ENCODE measurements at regions of chr1 and their contacts with region 1.

Region 1: DNA sequence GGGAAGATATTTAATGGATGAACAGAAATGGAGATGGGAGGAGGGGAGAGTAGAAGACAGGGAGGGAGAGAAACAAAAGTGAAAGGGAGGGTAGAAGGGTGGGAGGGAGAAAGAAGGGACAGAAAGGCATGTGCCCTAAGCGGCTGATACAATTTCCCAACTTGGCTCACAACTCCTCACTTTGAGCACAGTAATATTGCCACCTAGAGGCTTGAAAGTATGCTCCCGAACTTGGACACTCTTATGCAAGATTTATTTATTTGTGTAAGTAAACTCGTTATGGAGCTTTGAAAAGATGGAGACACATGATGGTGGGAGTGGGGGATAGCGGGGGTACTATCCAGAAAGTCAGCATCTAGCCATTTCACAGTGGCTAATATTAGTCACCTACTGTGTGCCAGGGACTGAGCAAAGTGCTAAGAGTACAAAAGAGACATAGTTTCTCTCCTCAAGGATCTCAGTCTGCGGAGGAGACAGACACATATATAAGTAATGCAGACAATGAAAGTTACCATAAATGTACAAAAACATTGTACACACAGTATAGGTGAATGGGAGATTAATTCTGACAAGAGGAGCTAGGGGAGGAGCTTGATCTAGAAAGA is 189.7 kb downstream of the SEC16B start:
- DNase-seq: peak in 1 of 2 experiments; percentile 36
- H3K4me3 ChIP-seq: no peak overlapping the region
- H3K27ac ChIP-seq: no peak overlapping the region
- H3K4me1 ChIP-seq: peaks cover 3 to 12% (median 5%) of the 10 kb centered on the region in 4 experiments; a peak in 6 of 7 replicates
- H3K27me3 ChIP-seq: no peaks in the 10 kb centered on the region
- CTCF ChIP-seq: peak in 2 of 3 experiments; percentile 56 to 68; a peak in 2 of 4 replicates
- EP300 ChIP-seq: no peak
- POLR2A ChIP-seq: no peak
- RAD21 ChIP-seq: peak; percentile 81 to 86

Region 2: DNA sequence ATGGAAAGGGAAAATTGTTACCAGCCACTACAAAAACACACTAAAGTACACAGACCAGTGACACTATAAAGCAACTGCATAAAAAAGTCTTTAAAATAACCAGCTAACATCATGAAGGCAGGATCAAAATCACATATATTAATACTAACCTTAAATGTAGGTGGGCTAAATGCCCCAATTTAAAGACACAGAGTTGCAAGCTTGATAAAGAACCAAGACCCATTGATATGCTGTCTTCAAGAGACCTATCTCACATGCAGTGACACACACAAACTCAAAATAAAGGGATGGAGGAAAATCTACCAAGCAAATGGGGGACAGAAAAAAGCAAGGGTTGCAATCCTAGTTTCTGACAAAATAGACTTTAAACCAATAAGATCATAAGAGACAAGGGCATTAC is 56.7 kb before region 1 on chr1:
- CTCF ChIA-PET with region 1: no interaction called
- POLR2A ChIA-PET with region 1: no interaction called
- DNase-seq: no peak
- H3K4me3 ChIP-seq: no peak overlapping the region
- H3K27ac ChIP-seq: no peak overlapping the region
- H3K4me1 ChIP-seq: no peaks in the 10 kb centered on the region
- H3K27me3 ChIP-seq: no peaks in the 10 kb centered on the region
- CTCF ChIP-seq: no peak
- EP300 ChIP-seq: no peak
- POLR2A ChIP-seq: no peak
- RAD21 ChIP-seq: no peak

Region 3: DNA sequence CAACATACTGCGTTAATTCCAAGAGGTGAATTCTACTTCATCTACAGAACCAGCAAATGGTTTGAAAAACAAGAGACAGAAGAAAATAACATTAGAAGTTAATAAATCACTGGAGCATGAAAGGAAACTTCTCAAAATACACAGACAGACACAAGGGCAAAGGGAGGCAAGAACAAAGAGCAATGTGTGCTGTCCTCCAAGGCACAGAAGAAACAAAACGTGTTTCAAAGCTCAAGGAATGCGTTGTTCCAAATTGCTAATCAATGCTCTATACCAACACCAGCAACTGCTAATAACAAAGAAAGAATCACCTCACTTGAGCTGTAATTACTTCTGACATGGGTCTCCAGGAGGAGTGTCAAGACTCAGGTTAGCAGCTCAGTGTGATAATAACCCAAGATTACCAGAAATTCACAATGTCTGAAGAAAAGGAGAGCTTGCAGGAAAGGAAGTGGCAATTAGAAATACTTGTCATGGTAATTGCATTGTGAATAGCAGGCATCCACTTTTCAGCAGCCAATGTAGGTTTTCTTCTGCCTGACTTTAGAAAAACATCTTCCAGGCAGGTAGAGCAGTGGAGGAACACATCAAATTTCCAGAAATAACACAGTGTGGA is 14.3 kb after region 1 on chr1:
- CTCF ChIA-PET with region 1: interaction called, 61 read pairs
- POLR2A ChIA-PET with region 1: no interaction called
- DNase-seq: peak in 1 of 2 experiments; percentile 10
- H3K4me3 ChIP-seq: peak overlapping the region in 1 of 4 experiments; percentile 10; a peak in 1 of 8 replicates
- H3K27ac ChIP-seq: no peak overlapping the region; the same call in none of the 2 replicates
- H3K4me1 ChIP-seq: peaks cover 0 to 17% (median 5%) of the 10 kb centered on the region in 4 experiments; a peak in 6 of 7 replicates
- H3K27me3 ChIP-seq: no peaks in the 10 kb centered on the region
- CTCF ChIP-seq: no peak
- EP300 ChIP-seq: peak in 1 of 2 experiments; percentile 66; a peak in 1 of 3 replicates
- POLR2A ChIP-seq: no peak
- RAD21 ChIP-seq: no peak

Region 4: GRCh38 chr1:177913762-177914540 is 133.8 kb after region 1 on chr1:
- CTCF ChIA-PET with region 1: interaction called, 11 read pairs
- POLR2A ChIA-PET with region 1: no interaction called
- DNase-seq: peak in 1 of 2 experiments; percentile 57
- H3K4me3 ChIP-seq: no peak overlapping the region
- H3K27ac ChIP-seq: no peak overlapping the region
- H3K4me1 ChIP-seq: no peaks in the 10 kb centered on the region
- H3K27me3 ChIP-seq: no peaks in the 10 kb centered on the region; a peak in 1 of 7 replicates
- CTCF ChIP-seq: peak; percentile 69 to 84 (median 81)
- EP300 ChIP-seq: no peak
- POLR2A ChIP-seq: no peak
- RAD21 ChIP-seq: peak; percentile 84 to 85